ENCODE measurements at regions of chr10 and their contacts with region 1.

Region 1: GRCh38 chr10:10824591-10825148 is 193.0 kb upstream of the CELF2 start:
- DNase-seq: peak in 4 of 5 donors; percentile 33 to 53 (median 42)
- ATAC-seq: peak; percentile 78 to 92 (median 88)
- H3K4me3 ChIP-seq: peak overlapping the region in 2 of 12 donors; percentile 1 to 15
- H3K27ac ChIP-seq: peak overlapping the region; percentile 28 to 89 (median 74)
- H3K4me1 ChIP-seq: peaks cover 0 to 48% (median 23%) of the 10 kb centered on the region in 12 donors
- H3K27me3 ChIP-seq: no peaks in the 10 kb centered on the region
- CTCF ChIP-seq: peak in 4 of 12 donors; percentile 10 to 40 (median 22)
- POLR2A ChIP-seq: no peak

Region 2: GRCh38 chr10:10515479-10516204 is 309.0 kb before region 1 on chr10:
- intact Hi-C with region 1: no loop called
- DNase-seq: no peak
- ATAC-seq: peak in 2 of 4 donors; percentile 22 to 71
- H3K4me3 ChIP-seq: peak overlapping the region in 3 of 12 donors; percentile 0 to 19 (median 8)
- H3K27ac ChIP-seq: no peak overlapping the region
- H3K4me1 ChIP-seq: peaks cover 0 to 6% (median 0%) of the 10 kb centered on the region in 12 donors
- H3K27me3 ChIP-seq: no peaks in the 10 kb centered on the region
- CTCF ChIP-seq: no peak
- POLR2A ChIP-seq: no peak

Region 3: GRCh38 chr10:10872035-10872673 is 47.5 kb after region 1 on chr10:
- intact Hi-C with region 1: loop called in 2 of 10 experiments (anchors 2 to 5 kb)
- DNase-seq: peak in 3 of 5 donors; percentile 43 to 57 (median 54)
- ATAC-seq: peak; percentile 91 to 99 (median 97)
- H3K4me3 ChIP-seq: peak overlapping the region in 1 of 12 donors; percentile 20
- H3K27ac ChIP-seq: peak overlapping the region; percentile 53 to 91 (median 76)
- H3K4me1 ChIP-seq: peaks cover 0 to 29% (median 19%) of the 10 kb centered on the region in 12 donors
- H3K27me3 ChIP-seq: no peaks in the 10 kb centered on the region
- CTCF ChIP-seq: no peak
- POLR2A ChIP-seq: no peak

Region 4: DNA sequence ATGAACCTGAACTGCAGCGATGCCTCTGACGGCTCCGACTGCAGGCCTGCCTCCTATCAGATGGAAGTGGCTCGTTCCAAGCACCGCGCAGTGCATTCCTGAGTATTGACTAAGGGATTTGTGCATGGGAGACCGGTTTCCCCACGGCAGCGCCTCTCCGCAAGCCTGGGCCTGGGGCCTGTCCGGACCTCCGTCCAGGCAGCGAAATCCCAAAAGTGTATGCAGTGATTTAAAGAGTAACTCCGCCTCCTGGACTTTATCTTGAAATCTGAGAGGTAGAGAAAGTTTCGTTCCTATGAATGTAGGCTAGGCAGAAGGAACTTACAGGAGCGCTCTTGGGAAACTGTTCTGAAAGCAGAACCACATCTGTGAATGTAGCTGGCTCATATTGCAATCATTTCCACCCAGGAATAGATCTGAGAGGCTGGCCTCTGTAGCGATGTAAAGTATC is 86.8 kb after region 1 on chr10:
- intact Hi-C with region 1: loop called in 3 of 10 experiments (anchors 10 kb)
- DNase-seq: peak; percentile 51 to 80 (median 74)
- ATAC-seq: peak; percentile 43 to 84 (median 77)
- H3K4me3 ChIP-seq: peak overlapping the region in 10 of 12 donors; percentile 12 to 47 (median 30)
- H3K27ac ChIP-seq: peak overlapping the region; percentile 58 to 92 (median 80)
- H3K4me1 ChIP-seq: peaks cover 0 to 45% (median 16%) of the 10 kb centered on the region in 12 donors
- H3K27me3 ChIP-seq: no peaks in the 10 kb centered on the region
- CTCF ChIP-seq: no peak
- POLR2A ChIP-seq: no peak